ENCODE measurements at regions of chr21 and their contacts with region 1.

Region 1: DNA sequence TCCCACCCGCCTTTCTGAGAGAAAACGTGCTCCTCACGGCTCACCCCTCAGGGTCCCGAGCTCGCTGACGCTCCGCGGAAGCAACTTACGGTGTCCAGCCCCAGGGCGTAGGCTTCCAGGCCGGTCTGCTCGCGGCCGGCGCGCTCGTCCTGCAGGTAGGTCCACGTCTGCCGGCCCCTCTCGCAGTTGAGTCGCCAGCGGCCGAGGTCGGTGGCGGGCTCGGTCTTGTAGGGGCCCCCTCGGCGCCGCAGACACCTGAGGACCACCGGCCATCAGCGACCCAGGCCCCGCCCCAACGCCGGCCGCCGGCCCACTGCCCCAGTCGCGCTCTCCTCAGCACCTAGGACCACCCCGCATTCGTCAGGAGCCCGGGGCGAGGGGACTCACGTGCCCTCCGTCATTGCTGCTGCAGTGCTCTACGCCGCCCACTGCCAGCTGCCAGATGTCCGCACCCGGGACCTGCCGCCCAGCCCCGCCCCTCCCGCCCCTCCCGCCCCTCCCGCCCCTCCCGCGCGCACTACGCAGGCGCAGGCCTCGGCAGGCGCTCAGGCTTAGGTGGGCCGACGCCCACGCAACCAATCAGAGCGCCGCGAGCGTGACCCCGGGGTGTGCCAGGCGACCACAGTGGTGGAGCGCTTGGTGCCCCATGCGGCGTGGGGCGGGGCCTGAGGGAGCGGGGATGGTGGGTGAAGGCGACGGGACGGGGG is at the start of gene LSS:
- DNase-seq: peak; percentile 94 to 98 (median 96)
- H3K4me3 ChIP-seq: peak within 1 kb of the TSS; percentile 61 to 100 (median 94)
- H3K27ac ChIP-seq: peak within 1 kb of the TSS; percentile 74 to 98 (median 93)
- H3K27me3 ChIP-seq: no peaks in the 10 kb centered on the region
- CTCF ChIP-seq: peak in 10 of 56 donors; percentile 4 to 27 (median 14)
- total RNA-seq, gene LSS: 61.5 to 278 (median 121) TPM

Region 2: GRCh38 chr21:46184625-46185555 is 43.6 kb before region 1 on chr21:
- intact Hi-C with region 1: loop called (anchors 5 kb)
- DNase-seq: peak; percentile 73 to 94 (median 89)
- H3K4me3 ChIP-seq: peak overlapping the region; percentile 36 to 95 (median 76)
- H3K27ac ChIP-seq: peak overlapping the region in 58 of 59 donors; percentile 34 to 98 (median 90)
- H3K27me3 ChIP-seq: no peaks in the 10 kb centered on the region
- CTCF ChIP-seq: peak in 1 of 56 donors; percentile 10

Region 3: DNA sequence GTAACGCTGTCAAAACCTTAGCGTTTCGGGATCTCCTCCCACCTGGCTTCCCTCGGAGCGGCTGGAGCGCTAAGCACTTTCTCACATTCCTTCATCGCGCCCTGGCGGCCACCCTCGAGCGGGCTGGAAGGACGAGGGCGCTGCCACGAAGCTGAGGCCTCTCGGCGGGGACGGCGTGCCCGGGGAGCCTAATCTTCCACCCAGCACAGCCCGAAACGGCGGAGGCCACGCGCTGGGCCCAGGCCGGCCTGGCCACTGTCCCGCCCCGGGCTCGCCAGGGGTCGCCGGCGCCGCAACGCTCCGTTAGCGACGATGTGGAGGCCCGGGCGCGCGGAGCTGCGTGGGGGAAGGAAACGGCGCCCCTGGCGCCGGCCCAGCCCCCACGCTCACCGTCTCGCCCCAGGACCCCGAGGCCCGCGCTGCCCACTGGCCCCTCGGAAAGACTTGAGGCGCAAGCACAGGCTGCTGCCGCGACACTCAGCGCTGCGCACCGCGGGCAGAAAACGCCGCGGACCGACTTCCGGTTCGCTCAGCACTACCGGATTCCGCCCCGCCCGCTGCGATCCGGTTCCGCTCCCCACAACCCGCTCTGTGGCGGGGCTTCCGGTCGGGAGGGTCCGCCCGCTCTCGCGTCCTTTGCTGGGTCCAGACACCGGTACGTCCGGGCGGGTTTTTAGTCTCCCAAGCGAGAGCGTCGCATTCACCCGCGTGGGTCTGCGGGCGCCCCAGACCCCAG is 57.4 kb after region 1 on chr21 and contains the start of gene YBEY:
- intact Hi-C with region 1: loop called in 1 of 2 experiments (anchors 5 kb)
- DNase-seq: peak; percentile 76 to 93 (median 88)
- H3K4me3 ChIP-seq: peak within 1 kb of the TSS; percentile 61 to 98 (median 86)
- H3K27ac ChIP-seq: peak within 1 kb of the TSS; percentile 74 to 98 (median 95)
- H3K27me3 ChIP-seq: no peaks in the 10 kb centered on the region
- CTCF ChIP-seq: peak in 48 of 56 donors; percentile 9 to 66 (median 34)
- total RNA-seq, gene YBEY: 4.9 to 22.3 (median 13.5) TPM

Region 4: GRCh38 chr21:46323227-46324128 is 95.0 kb after region 1 on chr21 and contains the start of gene C21orf58:
- intact Hi-C with region 1: loop called (anchors 2 kb)
- DNase-seq: peak; percentile 96 to 99 (median 98)
- H3K4me3 ChIP-seq: peak within 1 kb of the TSS; percentile 78 to 100 (median 99)
- H3K27ac ChIP-seq: peak within 1 kb of the TSS; percentile 83 to 100 (median 98)
- H3K27me3 ChIP-seq: no peaks in the 10 kb centered on the region
- CTCF ChIP-seq: peak in 10 of 56 donors; percentile 8 to 38 (median 18)
- total RNA-seq, gene C21orf58: 2.4 to 11.8 (median 5.4) TPM

Region 5: GRCh38 chr21:46458315-46459023 is 230.0 kb after region 1 on chr21 and contains the start of gene DIP2A:
- intact Hi-C with region 1: loop called in 1 of 2 experiments (anchors 10 kb)
- DNase-seq: peak; percentile 89 to 97 (median 94)
- H3K4me3 ChIP-seq: peak within 1 kb of the TSS; percentile 69 to 100 (median 95)
- H3K27ac ChIP-seq: peak within 1 kb of the TSS; percentile 76 to 97 (median 94)
- H3K27me3 ChIP-seq: no peaks in the 10 kb centered on the region
- CTCF ChIP-seq: peak in 37 of 56 donors; percentile 7 to 57 (median 32)
- total RNA-seq, gene DIP2A: 39.7 to 104 (median 66.4) TPM

Measured in dorsolateral prefrontal cortex (tissue), 120 donors.